Panc1 (cell line): ENCODE measurements at regions of chr18 and their contacts with region 1.

Region 1: DNA sequence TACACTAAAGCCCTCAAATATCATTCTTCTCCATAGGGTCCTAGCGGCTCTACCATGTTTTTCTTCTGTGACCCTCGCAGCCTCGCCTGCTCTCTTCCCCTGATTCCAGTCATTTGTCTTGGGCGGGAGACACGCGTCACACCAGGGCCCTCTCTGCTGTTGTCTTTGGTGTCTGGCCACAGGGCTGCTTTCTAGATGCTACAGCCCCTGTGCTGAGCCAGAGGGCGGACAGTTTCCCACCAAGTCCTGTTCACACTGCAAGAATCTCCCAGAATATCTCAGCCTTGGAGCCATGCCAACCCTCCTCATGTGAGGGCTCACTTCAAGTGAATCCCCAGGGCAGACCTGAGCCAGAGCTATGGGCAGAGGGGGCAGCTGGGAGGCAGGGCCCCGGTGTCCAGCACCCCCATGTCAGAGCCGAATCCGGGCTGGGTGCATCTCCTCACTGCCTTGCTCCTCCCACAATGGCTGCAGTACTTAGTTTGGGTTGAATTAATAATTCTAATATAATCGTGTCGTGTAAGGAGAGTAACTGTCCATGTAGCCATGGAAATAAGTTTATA is 42.1 kb downstream of the DIPK1C start:
- DNase-seq: no peak
- ATAC-seq: no peak
- H3K4me3 ChIP-seq: no peak overlapping the region
- H3K27ac ChIP-seq: no peak overlapping the region
- H3K4me1 ChIP-seq: no peaks in the 10 kb centered on the region
- H3K27me3 ChIP-seq: peaks cover 28% of the 10 kb centered on the region
- CTCF ChIP-seq: no peak

Region 2: GRCh38 chr18:74476140-74476539 is 61.1 kb after region 1 on chr18:
- CTCF ChIA-PET with region 1: no interaction called
- POLR2A ChIA-PET with region 1: no interaction called
- in situ Hi-C with region 1: no loop called
- intact Hi-C with region 1: loop called (anchors 5 kb)
- DNase-seq: no peak
- ATAC-seq: 0 out of 2 replicates have a peak, but pooled peaks have one; percentile 58
- H3K4me3 ChIP-seq: no peak overlapping the region
- H3K27ac ChIP-seq: no peak overlapping the region
- H3K4me1 ChIP-seq: no peaks in the 10 kb centered on the region
- H3K27me3 ChIP-seq: no peaks in the 10 kb centered on the region
- CTCF ChIP-seq: peak; percentile 83